ENCODE measurements at regions of chr3 and their contacts with region 1.

Region 1: DNA sequence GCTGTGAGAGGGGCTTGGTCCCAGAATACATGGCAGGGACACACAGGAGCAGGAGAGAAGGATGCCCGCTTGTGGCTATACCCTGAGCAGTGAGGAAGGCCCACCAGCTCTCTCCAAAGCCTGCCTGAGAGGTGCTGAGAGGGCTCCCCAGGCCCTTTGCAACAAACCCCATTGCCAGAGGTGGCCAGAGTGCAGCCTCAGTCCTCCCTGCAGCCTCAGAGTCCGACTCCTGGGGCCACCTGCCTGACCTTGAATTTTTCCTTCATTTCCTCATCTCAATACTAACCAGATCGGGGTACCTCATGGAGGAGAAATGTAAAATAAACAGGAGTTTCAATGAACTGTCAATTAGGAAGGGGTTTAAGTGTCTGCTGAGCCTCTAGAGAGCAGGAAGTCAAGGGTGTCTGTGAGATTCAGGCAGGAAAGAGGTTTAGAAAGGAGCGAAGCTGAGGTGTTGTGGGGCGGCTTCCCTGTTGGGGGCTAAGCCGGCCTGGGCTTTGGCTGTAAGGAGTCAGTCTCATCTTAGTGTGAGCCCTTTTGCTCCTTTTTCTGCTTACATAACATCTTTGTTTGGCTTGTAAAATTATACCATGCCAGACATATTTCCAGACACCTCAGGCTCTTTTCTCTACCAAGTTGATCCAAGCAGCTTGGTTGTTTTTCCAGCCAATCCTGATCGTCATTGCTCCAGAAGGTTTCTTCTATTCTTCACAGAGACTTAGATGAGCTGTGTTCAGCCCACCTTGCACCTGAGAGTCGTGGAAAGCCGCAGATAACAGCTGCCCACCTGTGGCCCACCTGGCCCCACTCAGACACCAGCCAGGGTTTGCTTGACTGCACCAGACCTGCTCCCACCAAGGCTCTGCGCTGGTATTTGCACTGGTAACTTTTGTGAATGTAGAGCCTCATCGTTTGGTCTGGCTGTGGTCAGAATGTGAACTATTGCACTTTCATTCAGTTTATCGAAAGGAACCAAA is 36.7 kb downstream of the CMTM7 start:
- DNase-seq: peak in 32 of 35 experiments; percentile 25 to 74 (median 42)
- ATAC-seq: peak; percentile 71 to 78 (median 76)
- H3K4me3 ChIP-seq: peak overlapping the region; percentile 6 to 30
- H3K4me3 Mint-ChIP-seq: peak overlapping the region; percentile 63 to 70 (median 68)
- H3K27ac ChIP-seq: peak overlapping the region; percentile 84
- H3K27ac Mint-ChIP-seq: peak overlapping the region; percentile 97 to 100
- H3K4me1 ChIP-seq: peaks cover 73 to 85% of the 10 kb centered on the region in 2 experiments
- H3K4me1 Mint-ChIP-seq: peaks cover 93 to 97% (median 95%) of the 10 kb centered on the region in 3 donors
- H3K27me3 ChIP-seq: no peaks in the 10 kb centered on the region
- H3K27me3 Mint-ChIP-seq: no peaks in the 10 kb centered on the region

Region 2: DNA sequence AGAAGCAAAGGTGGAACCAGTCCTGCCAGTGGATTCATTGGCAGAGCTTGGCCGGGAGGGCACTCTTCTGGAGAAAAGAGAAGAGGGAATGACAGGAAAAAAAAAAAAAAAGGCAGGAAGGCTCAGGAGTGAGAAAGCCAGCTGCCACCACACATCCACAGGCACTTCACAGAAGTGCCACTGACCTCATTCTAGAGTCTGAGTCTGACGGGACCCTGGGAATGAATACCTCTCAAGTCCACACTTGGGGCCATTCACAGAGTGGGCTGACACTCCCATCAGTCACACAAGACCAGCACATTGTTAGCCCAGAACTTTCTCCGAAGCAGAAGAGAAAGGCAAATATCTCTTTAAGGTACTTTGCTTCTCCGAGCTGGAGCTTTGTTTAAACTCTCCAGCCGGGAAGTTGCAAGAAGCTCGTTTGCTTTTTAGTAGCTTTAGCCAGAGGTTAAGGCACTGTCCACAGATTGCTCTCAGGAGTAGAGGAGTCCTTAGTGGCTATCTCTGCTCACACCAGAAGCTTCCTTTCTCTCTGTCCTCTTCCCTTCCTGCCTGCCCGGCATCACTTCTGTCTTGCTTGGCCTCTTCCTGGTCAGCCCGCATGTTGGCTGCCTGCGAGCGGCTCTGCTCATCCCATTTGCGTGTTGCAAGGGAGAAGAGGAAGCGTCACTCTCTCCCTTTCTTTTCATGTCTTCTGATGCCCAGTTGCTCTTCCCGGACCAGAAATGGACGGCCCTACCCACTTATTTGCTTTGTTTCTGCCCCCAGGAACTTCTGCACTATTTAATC is 20.5 kb after region 1 on chr3:
- CTCF ChIA-PET with region 1: interaction called, 4 to 5 read pairs
- POLR2A ChIA-PET with region 1: interaction called, 3 to 16 read pairs
- DNase-seq: no peak
- ATAC-seq: no peak
- H3K4me3 ChIP-seq: no peak overlapping the region
- H3K4me3 Mint-ChIP-seq: no peak overlapping the region
- H3K27ac ChIP-seq: no peak overlapping the region
- H3K27ac Mint-ChIP-seq: peak overlapping the region in 1 of 2 donors; percentile 23
- H3K4me1 ChIP-seq: peaks cover 6% of the 10 kb centered on the region in 2 experiments
- H3K4me1 Mint-ChIP-seq: peaks cover 51 to 62% (median 58%) of the 10 kb centered on the region in 3 donors
- H3K27me3 ChIP-seq: no peaks in the 10 kb centered on the region
- H3K27me3 Mint-ChIP-seq: no peaks in the 10 kb centered on the region

Region 3: DNA sequence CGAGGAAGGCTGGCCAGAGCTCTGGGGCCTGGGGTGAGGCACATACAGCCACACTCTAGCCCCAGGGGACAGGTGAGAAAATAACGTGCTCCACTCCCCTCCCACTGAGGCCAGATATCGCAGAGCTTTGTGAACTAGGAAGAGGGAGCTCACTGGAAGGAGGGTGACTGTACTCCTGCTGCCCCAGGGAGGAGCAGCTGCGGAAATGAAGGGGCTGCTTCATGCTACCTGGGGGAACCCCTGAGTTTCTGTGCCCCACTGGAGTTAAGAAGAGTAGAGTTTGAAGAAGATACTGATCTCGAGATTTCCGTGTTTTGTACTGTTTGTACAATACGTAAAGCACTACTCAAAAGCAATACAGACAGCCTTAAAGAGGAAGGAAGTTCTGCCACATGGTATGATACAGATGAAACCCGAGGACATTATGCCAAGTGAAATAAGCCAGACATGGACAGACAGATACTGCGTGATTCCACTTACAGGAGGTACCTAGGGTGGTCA is 29.6 kb after region 1 on chr3:
- CTCF ChIA-PET with region 1: interaction called, 4 to 6 read pairs
- POLR2A ChIA-PET with region 1: interaction called, 5 to 11 read pairs
- DNase-seq: peak; percentile 30 to 89 (median 72)
- ATAC-seq: peak; percentile 68 to 77 (median 71)
- H3K4me3 ChIP-seq: peak overlapping the region; percentile 16 to 28
- H3K4me3 Mint-ChIP-seq: peak overlapping the region; percentile 54 to 78 (median 56)
- H3K27ac ChIP-seq: peak overlapping the region; percentile 94
- H3K27ac Mint-ChIP-seq: peak overlapping the region in 1 of 2 donors; percentile 97
- H3K4me1 ChIP-seq: peaks cover 58 to 88% of the 10 kb centered on the region in 2 experiments
- H3K4me1 Mint-ChIP-seq: peaks cover 48 to 54% (median 53%) of the 10 kb centered on the region in 3 donors
- H3K27me3 ChIP-seq: no peaks in the 10 kb centered on the region
- H3K27me3 Mint-ChIP-seq: no peaks in the 10 kb centered on the region